ENCODE measurements at regions of chr3 and their contacts with region 1.

Region 1: GRCh38 chr3:57961828-57962447 is 46.3 kb upstream of the FLNB start:
- DNase-seq: no peak
- H3K4me3 Mint-ChIP-seq: no peak overlapping the region
- H3K27ac Mint-ChIP-seq: peak overlapping the region; percentile 77
- H3K4me1 Mint-ChIP-seq: peaks cover 30% of the 10 kb centered on the region
- H3K27me3 Mint-ChIP-seq: no peaks in the 10 kb centered on the region
- CTCF ChIP-seq: peak; percentile 35

Region 2: DNA sequence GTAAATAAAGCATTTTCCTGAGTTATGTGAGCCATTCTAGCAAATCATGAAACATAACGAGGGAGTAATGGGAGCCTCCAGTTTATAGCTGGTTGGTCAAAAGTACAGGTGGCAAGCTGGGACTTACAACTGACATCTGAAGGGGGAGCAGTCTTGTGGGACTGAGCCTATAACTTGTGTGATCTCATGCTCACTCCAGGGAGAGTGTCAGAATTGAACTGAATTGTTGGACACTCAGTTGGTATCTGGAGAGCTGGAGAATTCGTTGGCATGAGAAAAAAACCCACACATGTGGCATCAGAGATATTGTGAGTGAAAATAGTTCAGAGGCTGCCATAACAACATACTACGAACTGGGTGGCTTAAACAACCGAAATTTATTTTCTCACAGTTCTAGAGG is 246.3 kb before region 1 on chr3:
- CTCF ChIA-PET with region 1: no interaction called
- intact Hi-C with region 1: no loop called
- DNase-seq: no peak
- H3K4me3 Mint-ChIP-seq: no peak overlapping the region
- H3K27ac Mint-ChIP-seq: no peak overlapping the region
- H3K4me1 Mint-ChIP-seq: peaks cover under 1% of the 10 kb centered on the region
- H3K27me3 Mint-ChIP-seq: no peaks in the 10 kb centered on the region
- CTCF ChIP-seq: no peak

Region 3: GRCh38 chr3:58008140-58009025 is 46.4 kb after region 1 on chr3 and contains the start of gene FLNB:
- CTCF ChIA-PET with region 1: interaction called, 7 read pairs
- intact Hi-C with region 1: loop called (anchors 5 kb)
- DNase-seq: peak; percentile 80
- H3K4me3 Mint-ChIP-seq: peak within 1 kb of the TSS; percentile 77
- H3K27ac Mint-ChIP-seq: peak within 1 kb of the TSS; percentile 33
- H3K4me1 Mint-ChIP-seq: peaks cover 36% of the 10 kb centered on the region
- H3K27me3 Mint-ChIP-seq: no peaks in the 10 kb centered on the region
- CTCF ChIP-seq: peak; percentile 50
- total RNA-seq, gene FLNB: 136 and 147 TPM in 2 replicates

Region 4: GRCh38 chr3:58052373-58053273 is 90.7 kb after region 1 on chr3:
- CTCF ChIA-PET with region 1: no interaction called
- intact Hi-C with region 1: loop called (anchors 5 kb)
- DNase-seq: peak; percentile 77
- H3K4me3 Mint-ChIP-seq: peak overlapping the region; percentile 36
- H3K27ac Mint-ChIP-seq: peak overlapping the region; percentile 99
- H3K4me1 Mint-ChIP-seq: peaks cover 61% of the 10 kb centered on the region
- H3K27me3 Mint-ChIP-seq: no peaks in the 10 kb centered on the region
- CTCF ChIP-seq: no peak

Region 5: GRCh38 chr3:58173664-58174398 is 211.9 kb after region 1 on chr3:
- CTCF ChIA-PET with region 1: interaction called, 3 read pairs
- intact Hi-C with region 1: loop called (anchors 5 kb)
- DNase-seq: peak; percentile 71
- H3K4me3 Mint-ChIP-seq: no peak overlapping the region
- H3K27ac Mint-ChIP-seq: peak overlapping the region; percentile 22
- H3K4me1 Mint-ChIP-seq: peaks cover 49% of the 10 kb centered on the region
- H3K27me3 Mint-ChIP-seq: no peaks in the 10 kb centered on the region
- CTCF ChIP-seq: peak; percentile 51

Measured in Calu3 (cell line).